Heart right ventricle (tissue), 16 donors: ENCODE measurements at regions of chr4 and their contacts with region 1.

Region 1: DNA sequence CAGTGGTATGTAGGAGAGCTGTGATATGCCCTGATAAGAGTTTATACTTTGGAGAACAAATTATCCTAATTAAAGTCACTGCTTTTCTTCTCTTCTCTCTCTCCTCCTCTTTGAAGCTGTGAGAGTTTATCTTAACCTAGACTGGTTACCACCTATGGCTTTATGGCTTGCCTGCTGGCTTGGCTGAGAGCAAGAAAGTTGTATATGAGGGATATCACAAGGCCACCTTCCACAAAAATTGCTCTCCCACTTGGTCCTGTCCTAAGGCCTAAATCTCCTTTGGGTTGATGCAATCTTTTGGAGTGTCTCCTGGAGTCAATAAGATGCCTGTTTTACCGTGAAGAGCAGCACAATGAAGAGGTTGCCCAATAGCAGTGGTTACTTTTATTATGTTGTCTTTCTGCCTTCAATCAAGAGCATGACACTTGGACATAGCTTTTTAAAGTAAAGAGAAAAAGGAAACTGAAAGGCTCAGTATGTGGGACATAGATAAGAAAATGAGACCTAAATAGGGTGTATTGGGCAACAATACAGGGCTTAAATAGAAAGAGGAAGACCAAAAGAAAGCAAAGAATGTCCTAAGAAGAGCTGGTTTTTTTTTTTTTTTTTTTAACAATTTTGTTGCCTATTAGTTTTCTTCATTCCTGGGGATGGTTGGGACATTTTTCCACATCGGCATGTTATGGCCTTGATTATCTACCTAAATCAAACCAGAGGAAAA is 9.2 kb downstream of the GUCY1A1 start:
- DNase-seq: no peak
- ATAC-seq: peak in 7 of 8 donors; percentile 14 to 64 (median 37)
- H3K4me3 ChIP-seq: peak overlapping the region in 5 of 10 donors; percentile 2 to 26 (median 16)
- H3K27ac ChIP-seq: peak overlapping the region in 9 of 10 donors; percentile 37 to 68 (median 55)
- H3K4me1 ChIP-seq: peaks cover 0 to 87% (median 52%) of the 10 kb centered on the region in 9 donors
- H3K27me3 ChIP-seq: no peaks in the 10 kb centered on the region
- CTCF ChIP-seq: no peak

Region 2: DNA sequence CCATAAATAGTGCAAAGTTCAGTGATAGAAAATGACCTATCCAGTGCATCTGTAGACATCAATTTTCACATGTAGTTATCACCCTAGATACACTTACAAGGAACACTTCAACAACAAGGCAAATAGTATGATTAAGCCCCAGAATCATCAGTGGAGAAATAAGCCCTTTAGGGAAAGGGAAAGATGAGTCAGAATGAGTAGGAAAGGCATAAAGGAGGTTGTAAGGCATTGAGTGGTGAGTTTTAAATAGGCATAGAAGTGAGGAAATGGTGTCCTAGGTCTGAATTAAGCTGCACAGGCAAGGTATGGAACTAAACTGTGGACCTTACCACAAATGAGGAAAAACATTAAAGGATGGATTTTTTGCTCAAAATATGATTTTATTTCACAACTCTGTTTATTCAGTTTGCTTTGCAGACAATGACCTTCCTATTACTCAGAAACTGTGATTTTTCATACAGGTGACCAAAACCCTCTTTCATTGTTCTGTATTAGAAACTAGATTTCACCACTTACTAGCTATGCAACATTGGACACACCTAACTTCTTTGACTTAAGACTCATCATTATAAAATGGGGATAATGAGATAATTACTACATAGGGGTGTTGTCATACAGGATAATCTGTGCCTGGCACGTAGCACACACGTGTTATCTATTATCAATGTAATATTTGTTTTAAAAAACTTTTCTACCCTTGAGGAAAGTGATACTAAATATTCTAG is 242.1 kb before region 1 on chr4:
- intact Hi-C with region 1: loop called in 1 of 10 experiments (anchors 5 kb)
- DNase-seq: no peak
- ATAC-seq: peak in 1 of 8 donors; percentile 28
- H3K4me3 ChIP-seq: no peak overlapping the region
- H3K27ac ChIP-seq: peak overlapping the region in 1 of 10 donors; percentile 17
- H3K4me1 ChIP-seq: no peaks in the 10 kb centered on the region
- H3K27me3 ChIP-seq: no peaks in the 10 kb centered on the region
- CTCF ChIP-seq: no peak

Region 3: GRCh38 chr4:155512817-155513216 is 163.1 kb before region 1 on chr4:
- intact Hi-C with region 1: loop called in 1 of 10 experiments (anchors 5 kb)
- DNase-seq: peak in 1 of 2 donors; percentile 82
- ATAC-seq: peak; percentile 52 to 81 (median 76)
- H3K4me3 ChIP-seq: no peak overlapping the region
- H3K27ac ChIP-seq: peak overlapping the region in 9 of 10 donors; percentile 28 to 85 (median 68)
- H3K4me1 ChIP-seq: peaks cover 0 to 74% (median 39%) of the 10 kb centered on the region in 9 donors
- H3K27me3 ChIP-seq: no peaks in the 10 kb centered on the region
- CTCF ChIP-seq: no peak

Region 4: GRCh38 chr4:155659176-155659575 is 16.7 kb before region 1 on chr4:
- intact Hi-C with region 1: no loop called
- DNase-seq: no peak
- ATAC-seq: no peak
- H3K4me3 ChIP-seq: no peak overlapping the region
- H3K27ac ChIP-seq: peak overlapping the region in 3 of 10 donors; percentile 29 to 39 (median 31)
- H3K4me1 ChIP-seq: peaks cover 0 to 20% (median 10%) of the 10 kb centered on the region in 9 donors
- H3K27me3 ChIP-seq: no peaks in the 10 kb centered on the region
- CTCF ChIP-seq: no peak

Region 5: DNA sequence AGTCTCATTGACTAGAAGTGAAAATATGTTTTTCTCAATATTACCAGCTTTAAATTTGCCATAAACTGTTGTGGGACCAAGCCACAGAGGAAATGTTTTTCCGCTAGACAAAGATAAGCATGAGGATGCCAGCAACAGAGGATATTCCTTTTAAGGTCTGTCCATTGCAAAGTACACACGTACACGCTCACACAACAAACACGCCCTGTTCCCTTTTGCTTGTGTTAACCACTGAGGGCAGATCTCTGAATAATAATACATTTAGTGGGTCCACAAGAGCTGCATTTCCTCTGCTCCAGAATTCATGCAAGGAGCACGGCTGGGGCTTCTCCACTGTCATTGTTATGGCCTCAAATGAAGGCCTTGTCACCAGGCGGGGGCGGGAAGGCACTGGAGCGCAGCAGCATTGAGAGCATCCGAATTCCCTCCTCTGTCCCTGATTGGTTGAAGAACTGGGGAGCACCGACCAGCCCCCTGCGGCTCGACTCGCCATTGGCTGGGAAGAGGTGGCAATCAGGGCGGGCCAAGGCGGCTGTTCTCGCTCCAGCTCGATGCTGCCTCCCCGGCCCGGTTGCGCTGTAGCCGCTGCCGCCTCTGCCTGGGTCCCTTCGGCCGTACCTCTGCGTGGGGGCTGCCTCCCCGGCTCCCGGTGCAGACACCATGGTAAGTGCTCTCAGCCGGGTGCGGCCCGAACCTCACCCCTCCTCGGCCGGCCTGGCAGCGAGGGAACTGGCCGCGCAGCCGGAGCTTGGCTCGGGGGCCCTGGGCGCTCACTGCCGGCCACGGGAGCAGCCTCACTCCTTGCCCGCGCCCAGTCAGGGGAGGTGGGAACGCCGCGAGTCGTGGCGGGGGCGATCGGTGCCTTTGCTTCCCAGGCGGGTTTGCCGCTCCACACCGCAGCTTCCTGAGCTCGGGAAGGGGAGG is 82.9 kb after region 1 on chr4 and contains the start of gene GUCY1B1:
- intact Hi-C with region 1: loop called in 1 of 10 experiments (anchors 10 kb)
- DNase-seq: peak; percentile 95 to 97
- ATAC-seq: peak; percentile 96 to 99 (median 98)
- H3K4me3 ChIP-seq: peak within 1 kb of the TSS; percentile 70 to 90 (median 78)
- H3K27ac ChIP-seq: peak within 1 kb of the TSS; percentile 84 to 96 (median 92)
- H3K4me1 ChIP-seq: peaks cover 0 to 31% (median 12%) of the 10 kb centered on the region in 9 donors
- H3K27me3 ChIP-seq: peaks cover 0 to 19% (median 0%) of the 10 kb centered on the region in 7 donors
- CTCF ChIP-seq: peak; percentile 28 to 76 (median 57)
- total RNA-seq, gene GUCY1B1: 10.7 to 29.9 (median 17.1) TPM

Region 6: GRCh38 chr4:155777971-155778735 is 102.3 kb after region 1 on chr4:
- intact Hi-C with region 1: loop called in 2 of 10 experiments (anchors 5 to 10 kb)
- DNase-seq: no peak
- ATAC-seq: peak in 3 of 8 donors; percentile 46 to 54 (median 51)
- H3K4me3 ChIP-seq: no peak overlapping the region
- H3K27ac ChIP-seq: peak overlapping the region in 6 of 10 donors; percentile 8 to 52 (median 27)
- H3K4me1 ChIP-seq: peaks cover 0 to 29% (median 16%) of the 10 kb centered on the region in 9 donors
- H3K27me3 ChIP-seq: no peaks in the 10 kb centered on the region
- CTCF ChIP-seq: no peak

Region 7: DNA sequence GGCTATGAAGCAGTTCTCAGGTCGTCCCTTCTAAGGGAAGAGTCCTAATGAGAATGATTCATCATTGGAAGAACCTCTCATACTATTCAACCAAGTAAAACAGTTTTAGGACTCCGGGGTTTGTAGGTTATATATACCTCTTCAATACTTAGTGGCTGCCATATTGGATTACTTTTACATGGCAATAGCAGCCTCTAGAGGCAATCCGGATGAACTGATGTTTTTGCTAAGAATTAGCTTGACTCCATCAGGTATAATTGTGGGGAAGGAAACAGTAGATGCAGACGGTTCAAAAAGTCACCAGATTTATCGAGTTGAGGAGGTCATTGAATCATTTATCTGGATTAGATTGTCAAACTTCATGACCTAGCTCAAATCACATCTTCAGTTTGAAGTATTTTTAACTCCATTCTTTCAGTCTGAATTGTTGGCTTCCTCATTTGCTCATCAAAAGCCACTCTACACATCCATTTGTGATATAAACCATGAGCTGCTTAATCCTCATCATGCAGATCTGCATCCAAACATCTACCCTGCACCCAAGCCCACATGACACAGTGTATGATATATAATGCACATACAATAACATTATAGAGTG is 111.3 kb after region 1 on chr4:
- intact Hi-C with region 1: loop called in 2 of 10 experiments (anchors 5 to 10 kb)
- DNase-seq: no peak
- ATAC-seq: peak; percentile 73 to 91 (median 87)
- H3K4me3 ChIP-seq: no peak overlapping the region
- H3K27ac ChIP-seq: no peak overlapping the region
- H3K4me1 ChIP-seq: peaks cover 0 to 57% (median 7%) of the 10 kb centered on the region in 9 donors
- H3K27me3 ChIP-seq: no peaks in the 10 kb centered on the region
- CTCF ChIP-seq: peak; percentile 51 to 90 (median 73)